Cardiac septum (tissue), 1 donor: ENCODE measurements at regions of chr22 and their contacts with region 1.

Region 1: GRCh38 chr22:29245637-29246385 is 22.0 kb downstream of the RHBDD3 start:
- DNase-seq: peak; percentile 87

Region 2: GRCh38 chr22:28855355-28856094 is 390.3 kb before region 1 on chr22:
- intact Hi-C with region 1: loop called (anchors 5 kb)
- DNase-seq: no peak

Region 3: GRCh38 chr22:29040385-29041275 is 205.2 kb before region 1 on chr22:
- intact Hi-C with region 1: loop called (anchors 10 kb)
- DNase-seq: no peak

Region 4: DNA sequence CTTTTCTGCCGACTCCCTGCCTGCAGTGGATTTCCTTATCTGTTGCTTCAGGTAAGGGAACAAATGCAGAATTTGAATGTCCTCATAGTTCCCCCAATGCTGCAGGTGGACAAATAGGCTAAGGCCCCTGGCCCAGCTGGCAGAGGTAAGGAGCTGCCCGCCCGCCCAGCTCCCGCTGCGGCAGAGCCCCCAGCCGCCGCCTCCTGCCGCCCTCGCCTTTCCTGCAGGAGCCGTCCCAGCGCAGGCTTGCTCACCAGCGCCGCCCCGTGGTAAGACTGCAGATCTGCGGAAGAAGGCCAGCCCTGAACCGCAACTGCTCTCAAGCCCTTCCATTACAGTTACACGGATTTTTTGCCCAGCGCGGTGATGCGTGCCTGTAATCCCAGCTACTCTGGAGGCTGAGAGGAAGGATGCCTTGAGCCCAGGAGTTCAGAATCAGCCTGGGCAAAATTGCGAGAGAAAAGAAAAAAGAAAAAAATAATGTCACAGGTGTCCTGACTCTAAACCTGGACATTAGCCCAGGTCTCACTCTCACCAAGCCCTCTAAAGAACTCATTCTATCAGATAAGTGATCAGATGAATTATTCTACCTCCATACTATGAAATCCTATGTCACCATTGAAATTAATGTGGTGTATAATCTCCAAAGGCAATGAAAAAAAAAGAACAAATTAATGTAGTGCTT is 91.3 kb before region 1 on chr22:
- intact Hi-C with region 1: loop called (anchors 2 kb)
- DNase-seq: peak; percentile 94